Activated naive CD4-positive, alpha-beta T cell treated with anti-CD3 and anti-CD28 coated beads, Interleukin-2, amount 10 ng/mL, durations not matched to agents 7 days and 5 days (primary cell): ENCODE measurements at regions of chr1 and their contacts with region 1.

Region 1: GRCh38 chr1:25204797-25205480 is 27.4 kb downstream of the SYF2 start:
- DNase-seq: peak; percentile 22
- H3K4me3 Mint-ChIP-seq: no peak overlapping the region
- H3K27ac Mint-ChIP-seq: no peak overlapping the region
- H3K4me1 Mint-ChIP-seq: no peaks in the 10 kb centered on the region
- H3K27me3 Mint-ChIP-seq: peaks cover 64% of the 10 kb centered on the region

Region 2: DNA sequence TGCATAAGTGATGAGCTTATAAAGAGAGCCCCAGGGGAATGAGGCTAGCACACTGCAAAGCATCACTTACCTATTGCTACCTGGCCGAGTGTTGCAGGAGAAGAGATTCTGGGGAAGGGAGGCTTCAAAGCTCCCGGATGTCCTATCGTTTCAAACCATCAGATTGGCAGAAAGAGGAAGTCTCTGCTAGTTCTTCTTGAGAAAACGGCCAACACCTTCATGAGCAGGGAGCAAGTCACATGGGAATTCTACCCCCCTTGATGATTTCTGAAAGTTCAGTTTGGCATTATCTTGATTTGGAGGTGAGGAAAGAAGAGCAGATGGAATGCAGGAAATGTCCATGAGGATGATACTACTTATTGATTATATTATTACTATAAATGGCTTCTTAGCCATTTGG is 11.2 kb after region 1 on chr1:
- CTCF ChIA-PET with region 1: interaction called, 10 read pairs
- DNase-seq: no peak
- H3K4me3 Mint-ChIP-seq: no peak overlapping the region
- H3K27ac Mint-ChIP-seq: no peak overlapping the region
- H3K4me1 Mint-ChIP-seq: peaks cover 4% of the 10 kb centered on the region
- H3K27me3 Mint-ChIP-seq: peaks cover 20% of the 10 kb centered on the region